ENCODE measurements at regions of chr2 and their contacts with region 1.

Region 1: DNA sequence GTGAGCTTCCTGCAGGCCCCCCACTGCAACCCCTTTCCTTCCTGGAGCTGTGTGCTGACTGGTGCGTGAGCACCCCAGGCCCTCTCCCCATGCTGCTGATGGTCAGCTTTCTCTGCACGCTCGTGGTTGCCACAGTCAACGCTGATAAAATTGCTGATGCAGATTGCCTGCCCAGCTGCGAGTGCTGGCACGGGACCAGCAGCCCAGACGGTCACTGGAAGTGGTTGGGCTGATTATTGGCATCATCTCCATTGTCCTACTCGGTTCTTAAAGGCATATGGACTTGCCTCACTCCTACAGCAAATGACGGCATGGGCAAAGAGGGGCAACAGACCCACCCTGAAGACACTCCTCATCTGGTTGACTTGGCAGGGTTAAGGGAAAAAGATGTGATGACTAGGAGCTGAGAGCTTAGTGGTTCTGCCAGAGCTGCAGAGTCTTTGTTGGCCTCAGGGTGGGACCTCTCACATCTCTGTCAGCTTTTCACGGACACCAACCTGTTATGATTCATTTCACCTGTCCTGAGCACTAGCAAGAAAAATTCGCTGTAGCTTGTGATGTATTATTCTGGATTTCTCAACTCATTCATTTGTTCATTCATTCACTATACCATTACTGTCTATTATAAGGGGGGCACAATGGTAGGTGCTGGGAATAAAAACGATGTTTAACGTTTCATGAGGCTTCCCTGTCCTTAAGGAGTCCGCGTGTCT is 38.4 kb downstream of the PAX8 start:
- DNase-seq: peak; percentile 68 to 82
- H3K4me3 ChIP-seq: peak overlapping the region; percentile 16; the same call in 1 of the 2 replicates
- H3K27ac ChIP-seq: peak overlapping the region; percentile 80
- H3K4me1 ChIP-seq: peaks cover 49% of the 10 kb centered on the region
- H3K27me3 ChIP-seq: no peaks in the 10 kb centered on the region
- CTCF ChIP-seq: no peak

Region 2: DNA sequence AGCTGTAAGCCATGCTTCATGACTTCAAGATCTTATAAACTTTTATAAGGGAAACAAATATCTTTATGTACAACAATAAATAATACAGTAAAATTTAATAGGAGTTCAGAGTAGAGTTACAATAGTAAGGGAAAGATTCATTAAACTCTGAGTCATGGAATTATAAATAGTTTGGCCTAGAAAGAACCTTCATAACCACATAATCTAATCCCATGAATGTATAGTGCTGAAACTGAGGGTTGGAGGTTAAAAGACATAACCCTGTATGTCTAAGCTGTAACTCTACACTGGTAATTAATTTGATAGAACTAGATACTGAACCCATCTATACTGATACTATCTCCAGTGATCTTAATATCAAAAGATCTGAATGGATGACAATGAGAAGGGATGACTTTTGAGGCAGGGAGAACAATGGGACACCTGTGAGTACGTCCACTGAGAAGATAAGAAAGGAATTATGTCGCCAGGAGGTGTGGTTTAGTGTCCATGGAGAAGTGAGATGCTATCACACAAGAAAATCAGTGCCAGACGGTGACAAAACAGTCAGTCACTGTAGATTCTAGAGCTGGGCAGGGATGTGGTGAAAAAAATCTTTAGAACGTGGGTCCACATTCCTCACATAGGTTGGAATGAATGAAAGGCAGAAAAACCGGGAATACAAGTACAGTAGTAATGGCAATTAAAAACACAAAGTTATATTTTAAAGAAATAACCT is 171.4 kb before region 1 on chr2:
- CTCF ChIA-PET with region 1: interaction called, 3 read pairs
- POLR2A ChIA-PET with region 1: no interaction called
- intact Hi-C with region 1: loop called (anchors 2 kb)
- DNase-seq: peak; percentile 59 to 96
- H3K4me3 ChIP-seq: no peak overlapping the region; the same call in 1 of the 2 replicates
- H3K27ac ChIP-seq: peak overlapping the region; percentile 87
- H3K4me1 ChIP-seq: peaks cover 52% of the 10 kb centered on the region
- H3K27me3 ChIP-seq: no peaks in the 10 kb centered on the region
- CTCF ChIP-seq: no peak

Region 3: GRCh38 chr2:113103277-113103676 is 137.0 kb before region 1 on chr2:
- CTCF ChIA-PET with region 1: no interaction called
- POLR2A ChIA-PET with region 1: no interaction called
- intact Hi-C with region 1: no loop called
- DNase-seq: no peak
- H3K4me3 ChIP-seq: no peak overlapping the region
- H3K27ac ChIP-seq: no peak overlapping the region
- H3K4me1 ChIP-seq: no peaks in the 10 kb centered on the region
- H3K27me3 ChIP-seq: no peaks in the 10 kb centered on the region
- CTCF ChIP-seq: no peak

Region 4: GRCh38 chr2:113148606-113149560 is 91.4 kb before region 1 on chr2:
- CTCF ChIA-PET with region 1: no interaction called
- POLR2A ChIA-PET with region 1: no interaction called
- intact Hi-C with region 1: no loop called
- DNase-seq: no peak
- H3K4me3 ChIP-seq: no peak overlapping the region
- H3K27ac ChIP-seq: no peak overlapping the region
- H3K4me1 ChIP-seq: no peaks in the 10 kb centered on the region
- H3K27me3 ChIP-seq: no peaks in the 10 kb centered on the region
- CTCF ChIP-seq: no peak

Region 5: GRCh38 chr2:113198790-113199612 is 41.3 kb before region 1 on chr2:
- CTCF ChIA-PET with region 1: interaction called, 10 read pairs
- POLR2A ChIA-PET with region 1: interaction called, 4 read pairs
- intact Hi-C with region 1: loop called (anchors 1 kb)
- DNase-seq: peak; percentile 72 to 93
- H3K4me3 ChIP-seq: peak overlapping the region; percentile 67
- H3K27ac ChIP-seq: peak overlapping the region; percentile 78
- H3K4me1 ChIP-seq: peaks cover 6% of the 10 kb centered on the region; the same call in 1 of the 2 replicates
- H3K27me3 ChIP-seq: no peaks in the 10 kb centered on the region
- CTCF ChIP-seq: peak; percentile 83

Region 6: GRCh38 chr2:113203901-113204519 is 36.3 kb before region 1 on chr2:
- CTCF ChIA-PET with region 1: interaction called, 10 read pairs
- POLR2A ChIA-PET with region 1: interaction called, 4 read pairs
- intact Hi-C with region 1: loop called (anchors 1 kb)
- DNase-seq: peak; percentile 64 to 79
- H3K4me3 ChIP-seq: no peak overlapping the region
- H3K27ac ChIP-seq: no peak overlapping the region
- H3K4me1 ChIP-seq: peaks cover 6% of the 10 kb centered on the region; the same call in 1 of the 2 replicates
- H3K27me3 ChIP-seq: no peaks in the 10 kb centered on the region
- CTCF ChIP-seq: peak; percentile 94

Region 7: GRCh38 chr2:113282747-113283533 is 42.6 kb after region 1 on chr2:
- CTCF ChIA-PET with region 1: no interaction called
- POLR2A ChIA-PET with region 1: no interaction called
- intact Hi-C with region 1: loop called (anchors 1 kb)
- DNase-seq: peak; percentile 62 to 79
- H3K4me3 ChIP-seq: no peak overlapping the region
- H3K27ac ChIP-seq: peak overlapping the region; percentile 99
- H3K4me1 ChIP-seq: peaks cover 65% of the 10 kb centered on the region
- H3K27me3 ChIP-seq: no peaks in the 10 kb centered on the region
- CTCF ChIP-seq: peak; percentile 54; the same call in 1 of the 2 replicates

Region 8: GRCh38 chr2:113831161-113831560 is 590.9 kb after region 1 on chr2:
- CTCF ChIA-PET with region 1: no interaction called
- POLR2A ChIA-PET with region 1: interaction called, 17 read pairs
- intact Hi-C with region 1: no loop called
- DNase-seq: peak; percentile 71 to 93
- H3K4me3 ChIP-seq: no peak overlapping the region
- H3K27ac ChIP-seq: peak overlapping the region; percentile 80
- H3K4me1 ChIP-seq: peaks cover 10% of the 10 kb centered on the region
- H3K27me3 ChIP-seq: no peaks in the 10 kb centered on the region
- CTCF ChIP-seq: no peak

Region 9: GRCh38 chr2:113940891-113941290 is 700.6 kb after region 1 on chr2:
- CTCF ChIA-PET with region 1: no interaction called
- POLR2A ChIA-PET with region 1: no interaction called
- intact Hi-C with region 1: no loop called
- DNase-seq: no peak
- H3K4me3 ChIP-seq: no peak overlapping the region
- H3K27ac ChIP-seq: no peak overlapping the region
- H3K4me1 ChIP-seq: no peaks in the 10 kb centered on the region
- H3K27me3 ChIP-seq: no peaks in the 10 kb centered on the region
- CTCF ChIP-seq: no peak